ENCODE measurements at regions of chr3 and their contacts with region 1.

Region 1: DNA sequence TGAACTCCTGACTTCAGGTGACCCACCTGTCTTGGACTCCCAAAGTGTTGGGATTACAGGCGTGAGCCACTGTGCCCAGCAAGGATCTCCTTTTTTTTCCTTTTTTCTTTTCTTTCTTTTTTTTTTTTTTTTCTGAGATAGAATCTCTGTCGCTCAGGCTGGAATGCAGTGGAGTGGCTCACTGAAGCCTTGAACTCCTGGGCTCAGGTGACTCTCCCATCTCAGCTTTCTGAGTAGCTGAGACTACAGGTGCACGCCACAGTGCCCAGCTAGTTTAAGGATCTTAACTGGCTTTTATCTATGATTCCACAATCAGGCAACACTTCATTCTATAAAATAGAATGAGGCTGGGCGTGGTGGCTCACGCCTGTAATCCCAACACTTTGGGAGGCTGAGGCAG is 16.3 kb upstream of the NICN1 start:
- DNase-seq: no peak
- H3K4me3 ChIP-seq: no peak overlapping the region
- H3K27ac ChIP-seq: no peak overlapping the region
- H3K4me1 ChIP-seq: peaks cover 0 to 15% (median 11%) of the 10 kb centered on the region in 4 donors
- H3K27me3 ChIP-seq: no peaks in the 10 kb centered on the region
- CTCF ChIP-seq: no peak
- EP300 ChIP-seq: no peak
- POLR2A ChIP-seq: no peak

Region 2: GRCh38 chr3:49295489-49296058 is 149.8 kb before region 1 on chr3:
- intact Hi-C with region 1: loop called (anchors 5 kb)
- DNase-seq: no peak
- H3K4me3 ChIP-seq: no peak overlapping the region
- H3K27ac ChIP-seq: peak overlapping the region in 2 of 4 donors; percentile 76 to 80
- H3K4me1 ChIP-seq: peaks cover 0 to 22% (median 15%) of the 10 kb centered on the region in 4 donors
- H3K27me3 ChIP-seq: no peaks in the 10 kb centered on the region
- CTCF ChIP-seq: peak in 3 of 4 experiments; percentile 36 to 64 (median 55)
- EP300 ChIP-seq: no peak
- POLR2A ChIP-seq: no peak

Region 3: GRCh38 chr3:49377483-49377882 is 67.9 kb before region 1 on chr3:
- intact Hi-C with region 1: no loop called
- DNase-seq: no peak
- H3K4me3 ChIP-seq: no peak overlapping the region
- H3K27ac ChIP-seq: no peak overlapping the region
- H3K4me1 ChIP-seq: peaks cover 0 to 43% (median 12%) of the 10 kb centered on the region in 4 donors
- H3K27me3 ChIP-seq: no peaks in the 10 kb centered on the region
- CTCF ChIP-seq: no peak
- EP300 ChIP-seq: no peak
- POLR2A ChIP-seq: no peak

Region 4: GRCh38 chr3:49582177-49582576 is 136.8 kb after region 1 on chr3:
- intact Hi-C with region 1: no loop called
- DNase-seq: no peak
- H3K4me3 ChIP-seq: no peak overlapping the region
- H3K27ac ChIP-seq: no peak overlapping the region
- H3K4me1 ChIP-seq: no peaks in the 10 kb centered on the region
- H3K27me3 ChIP-seq: no peaks in the 10 kb centered on the region
- CTCF ChIP-seq: no peak
- EP300 ChIP-seq: no peak
- POLR2A ChIP-seq: no peak

Region 5: GRCh38 chr3:50044976-50045375 is 599.6 kb after region 1 on chr3:
- intact Hi-C with region 1: no loop called
- DNase-seq: no peak
- H3K4me3 ChIP-seq: no peak overlapping the region
- H3K27ac ChIP-seq: no peak overlapping the region
- H3K4me1 ChIP-seq: peaks cover 0 to under 1% (median 0%) of the 10 kb centered on the region in 4 donors
- H3K27me3 ChIP-seq: no peaks in the 10 kb centered on the region
- CTCF ChIP-seq: no peak
- EP300 ChIP-seq: no peak
- POLR2A ChIP-seq: no peak

Measured in sigmoid colon (tissue), 7 donors.